CD4-positive, alpha-beta T cell (primary cell): ENCODE measurements at regions of chr1 and their contacts with region 1.

Region 1: GRCh38 chr1:37177247-37177864 is 143.0 kb upstream of the GRIK3 start:
- DNase-seq: peak in 2 of 14 experiments; percentile 15 to 20
- ATAC-seq: no peak
- H3K4me3 ChIP-seq: no peak overlapping the region
- H3K4me3 Mint-ChIP-seq: no peak overlapping the region
- H3K27ac ChIP-seq: no peak overlapping the region
- H3K27ac Mint-ChIP-seq: no peak overlapping the region
- H3K4me1 ChIP-seq: no peaks in the 10 kb centered on the region
- H3K4me1 Mint-ChIP-seq: no peaks in the 10 kb centered on the region
- H3K27me3 ChIP-seq: peaks cover 10 to 12% of the 10 kb centered on the region in 2 experiments
- H3K27me3 Mint-ChIP-seq: peaks cover 65% of the 10 kb centered on the region
- CTCF ChIP-seq: no peak

Region 2: GRCh38 chr1:36576118-36576517 is 601.2 kb before region 1 on chr1:
- CTCF ChIA-PET with region 1: no interaction called
- POLR2A ChIA-PET with region 1: no interaction called
- intact Hi-C with region 1: loop called in 1 of 2 experiments (anchors 5 kb)
- DNase-seq: peak; percentile 16 to 70 (median 38)
- ATAC-seq: no peak
- H3K4me3 ChIP-seq: no peak overlapping the region
- H3K4me3 Mint-ChIP-seq: no peak overlapping the region
- H3K27ac ChIP-seq: no peak overlapping the region
- H3K27ac Mint-ChIP-seq: no peak overlapping the region
- H3K4me1 ChIP-seq: no peaks in the 10 kb centered on the region
- H3K4me1 Mint-ChIP-seq: no peaks in the 10 kb centered on the region
- H3K27me3 ChIP-seq: peaks cover 4 to 19% of the 10 kb centered on the region in 2 experiments
- H3K27me3 Mint-ChIP-seq: peaks cover 53% of the 10 kb centered on the region
- CTCF ChIP-seq: peak; percentile 72

Region 3: DNA sequence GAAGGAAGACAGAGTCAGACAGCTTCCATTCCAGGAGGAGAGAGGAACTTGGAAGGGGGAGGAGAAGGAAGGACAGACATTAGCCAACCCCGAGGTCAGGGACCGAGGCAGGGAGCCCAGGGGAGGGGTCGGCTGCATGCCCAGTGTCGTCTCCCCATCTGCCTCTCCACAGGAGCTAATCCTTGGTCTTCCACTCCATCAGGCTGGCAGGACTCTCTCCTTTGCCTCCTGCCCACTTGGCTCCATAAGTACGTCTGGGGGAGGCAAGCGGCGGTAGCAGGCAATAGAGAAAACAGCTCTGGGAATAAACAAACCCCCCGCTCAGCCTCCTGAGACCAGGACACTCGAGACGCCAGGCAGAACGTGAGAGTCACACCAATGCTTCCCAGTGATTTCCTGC is 214.3 kb before region 1 on chr1:
- CTCF ChIA-PET with region 1: no interaction called
- POLR2A ChIA-PET with region 1: no interaction called
- intact Hi-C with region 1: no loop called
- DNase-seq: no peak
- ATAC-seq: no peak
- H3K4me3 ChIP-seq: no peak overlapping the region
- H3K4me3 Mint-ChIP-seq: no peak overlapping the region
- H3K27ac ChIP-seq: no peak overlapping the region
- H3K27ac Mint-ChIP-seq: no peak overlapping the region
- H3K4me1 ChIP-seq: no peaks in the 10 kb centered on the region
- H3K4me1 Mint-ChIP-seq: no peaks in the 10 kb centered on the region
- H3K27me3 ChIP-seq: peaks cover 0 to 3% of the 10 kb centered on the region in 2 experiments
- H3K27me3 Mint-ChIP-seq: peaks cover 5% of the 10 kb centered on the region
- CTCF ChIP-seq: no peak